Tibial artery (tissue), 4 donors: ENCODE measurements at regions of chr6 and their contacts with region 1.

Region 1: GRCh38 chr6:130018292-130018743 is at the start of gene L3MBTL3:
- DNase-seq: peak; percentile 88 to 91
- H3K4me3 ChIP-seq: peak within 1 kb of the TSS; percentile 81 to 82
- H3K27ac ChIP-seq: peak within 1 kb of the TSS; percentile 81 to 83
- H3K4me1 ChIP-seq: peaks cover 0 to 4% (median 2%) of the 10 kb centered on the region in 4 donors
- H3K27me3 ChIP-seq: no peaks in the 10 kb centered on the region
- CTCF ChIP-seq: no peak

Region 2: DNA sequence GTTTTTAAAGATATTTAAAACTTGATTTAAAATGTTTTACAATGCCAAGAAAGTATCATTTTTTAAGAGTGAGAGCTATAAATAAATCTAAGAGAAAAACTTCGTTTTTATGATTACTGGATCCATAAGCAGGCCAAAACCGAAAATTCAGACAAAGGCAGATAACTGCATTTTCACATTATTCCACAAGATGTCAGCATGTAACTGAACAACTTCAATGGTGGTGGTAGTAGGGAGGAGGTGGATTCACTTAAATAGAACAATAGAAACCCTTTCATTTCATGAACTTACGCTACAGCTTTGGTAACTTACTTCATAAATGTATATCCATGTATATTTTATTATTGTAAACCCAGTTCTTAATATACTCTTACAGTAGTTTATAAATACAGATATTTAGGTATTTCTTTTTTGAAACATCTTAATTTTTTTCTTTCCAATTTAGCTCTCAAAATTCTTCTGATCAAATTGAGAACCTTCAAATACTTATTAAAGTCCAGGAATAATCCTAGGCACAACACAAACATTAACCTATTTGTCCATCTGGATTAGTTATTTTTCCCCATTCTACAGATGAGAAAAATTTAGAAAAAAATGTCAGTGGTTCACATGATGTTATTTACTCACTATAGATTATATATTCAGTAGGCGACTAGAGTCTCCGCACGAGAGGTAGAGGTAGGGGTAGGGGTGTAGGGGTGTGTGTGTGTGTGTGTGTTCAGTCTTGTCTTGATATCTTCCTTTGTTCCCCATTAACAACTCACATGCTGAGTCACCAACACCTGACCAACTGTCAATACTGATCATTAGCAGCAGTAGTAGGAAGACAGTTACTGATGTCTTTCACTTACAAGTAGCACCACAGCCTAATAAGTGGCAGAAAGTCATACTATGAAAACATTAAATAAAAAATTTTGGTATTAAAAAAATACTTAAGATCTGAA is 419.8 kb before region 1 on chr6:
- intact Hi-C with region 1: loop called (anchors 10 kb)
- DNase-seq: no peak
- H3K4me3 ChIP-seq: no peak overlapping the region
- H3K27ac ChIP-seq: no peak overlapping the region
- H3K4me1 ChIP-seq: no peaks in the 10 kb centered on the region
- H3K27me3 ChIP-seq: no peaks in the 10 kb centered on the region
- CTCF ChIP-seq: peak; percentile 81 to 84

Region 3: DNA sequence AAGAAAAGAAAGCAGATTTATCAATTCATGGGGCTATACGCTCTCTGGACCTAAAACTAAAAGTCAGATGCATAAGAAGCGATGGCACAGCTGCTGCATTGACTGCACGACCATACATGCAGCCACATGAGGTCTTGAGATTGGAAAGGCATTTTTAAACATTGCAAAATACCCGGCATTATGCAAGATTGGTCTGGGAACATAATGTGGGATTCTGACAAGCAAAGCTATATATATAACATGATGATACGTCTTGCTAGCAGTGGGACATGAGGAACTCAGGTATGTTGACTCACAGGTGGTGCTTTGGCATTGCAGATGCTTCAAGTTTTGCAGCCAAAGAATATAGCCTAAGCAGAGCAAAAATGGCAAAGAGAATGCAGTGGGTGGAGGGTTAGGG is 149.3 kb after region 1 on chr6:
- intact Hi-C with region 1: no loop called
- DNase-seq: no peak
- H3K4me3 ChIP-seq: no peak overlapping the region
- H3K27ac ChIP-seq: no peak overlapping the region
- H3K4me1 ChIP-seq: no peaks in the 10 kb centered on the region
- H3K27me3 ChIP-seq: no peaks in the 10 kb centered on the region
- CTCF ChIP-seq: no peak